ENCODE measurements at regions of chr11 and their contacts with region 1.

Region 1: GRCh38 chr11:108647701-108648527 is 17.0 kb upstream of the DDX10 start:
- DNase-seq: peak; percentile 69
- ATAC-seq: peak; percentile 99
- H3K4me3 ChIP-seq: no peak overlapping the region
- H3K27ac ChIP-seq: no peak overlapping the region
- H3K4me1 ChIP-seq: peaks cover 0 to 4% of the 10 kb centered on the region in 2 experiments; a peak in 2 of 4 replicates
- H3K27me3 ChIP-seq: no peaks in the 10 kb centered on the region
- CTCF ChIP-seq: peak; percentile 82 to 90 (median 84)
- POLR2A ChIP-seq: no peak
- RAD21 ChIP-seq: peak; percentile 99

Region 2: DNA sequence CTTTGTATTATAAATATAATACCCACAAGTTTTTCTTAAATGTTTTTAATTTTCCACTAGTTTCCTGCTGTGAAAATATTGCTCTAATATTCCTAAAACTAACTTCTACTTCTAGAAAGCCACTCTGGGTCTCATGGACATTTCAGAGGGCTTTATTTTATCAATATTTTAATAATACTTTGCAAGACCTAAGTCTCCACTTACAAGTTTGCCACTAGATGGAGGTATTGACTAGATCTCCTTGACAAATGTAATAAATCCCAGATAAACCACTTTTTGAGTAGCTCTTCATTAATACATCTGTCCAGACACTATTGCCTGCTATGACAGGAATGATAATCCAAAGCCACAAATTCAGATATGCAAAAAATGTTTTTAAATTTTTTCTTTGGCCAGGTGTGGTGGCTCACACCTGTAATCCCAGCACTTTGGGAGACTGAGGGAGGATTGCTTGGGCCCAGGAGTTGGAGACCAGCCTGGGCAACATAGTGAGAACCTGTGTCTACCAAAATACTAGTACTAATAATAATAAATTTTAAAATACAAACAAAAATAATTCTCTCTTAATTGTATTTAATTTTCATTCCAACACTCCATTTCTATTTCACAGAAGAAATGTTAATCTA is 530.1 kb before region 1 on chr11:
- CTCF ChIA-PET with region 1: interaction called, 23 read pairs
- POLR2A ChIA-PET with region 1: interaction called, 3 read pairs
- RAD21 ChIA-PET with region 1: no interaction called
- intact Hi-C with region 1: loop called (anchors 2 kb)
- DNase-seq: peak; percentile 52
- ATAC-seq: no peak
- H3K4me3 ChIP-seq: no peak overlapping the region
- H3K27ac ChIP-seq: no peak overlapping the region
- H3K4me1 ChIP-seq: peaks cover 5 to 28% of the 10 kb centered on the region in 2 experiments; a peak in 3 of 4 replicates
- H3K27me3 ChIP-seq: no peaks in the 10 kb centered on the region
- CTCF ChIP-seq: peak; percentile 61 to 75 (median 66); a peak in 5 of 6 replicates
- POLR2A ChIP-seq: no peak
- RAD21 ChIP-seq: peak; percentile 85

Region 3: DNA sequence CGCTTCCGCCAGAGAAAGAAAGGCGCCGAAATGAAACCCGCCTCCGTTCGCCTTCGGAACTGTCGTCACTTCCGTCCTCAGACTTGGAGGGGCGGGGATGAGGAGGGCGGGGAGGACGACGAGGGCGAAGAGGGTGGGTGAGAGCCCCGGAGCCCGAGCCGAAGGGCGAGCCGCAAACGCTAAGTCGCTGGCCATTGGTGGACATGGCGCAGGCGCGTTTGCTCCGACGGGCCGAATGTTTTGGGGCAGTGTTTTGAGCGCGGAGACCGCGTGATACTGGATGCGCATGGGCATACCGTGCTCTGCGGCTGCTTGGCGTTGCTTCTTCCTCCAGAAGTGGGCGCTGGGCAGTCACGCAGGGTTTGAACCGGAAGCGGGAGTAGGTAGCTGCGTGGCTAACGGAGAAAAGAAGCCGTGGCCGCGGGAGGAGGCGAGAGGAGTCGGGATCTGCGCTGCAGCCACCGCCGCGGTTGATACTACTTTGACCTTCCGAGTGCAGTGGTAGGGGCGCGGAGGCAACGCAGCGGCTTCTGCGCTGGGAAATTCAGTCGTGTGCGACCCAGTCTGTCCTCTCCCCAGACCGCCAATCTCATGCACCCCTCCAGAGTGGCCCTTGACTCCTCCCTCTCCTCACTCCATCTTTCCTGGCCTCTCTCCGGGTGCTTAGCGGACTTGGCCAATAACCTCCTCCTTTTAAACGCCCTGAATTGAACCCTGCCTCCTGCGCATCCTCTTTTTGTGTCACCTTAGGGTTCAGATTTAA is 425.0 kb before region 1 on chr11 and contains the start of gene ATM:
- CTCF ChIA-PET with region 1: interaction called, 4 read pairs
- POLR2A ChIA-PET with region 1: no interaction called
- RAD21 ChIA-PET with region 1: no interaction called
- intact Hi-C with region 1: loop called (anchors 1 kb)
- DNase-seq: peak; percentile 98
- ATAC-seq: peak; percentile 93
- H3K4me3 ChIP-seq: peak within 1 kb of the TSS; percentile 86 to 90
- H3K27ac ChIP-seq: peak within 1 kb of the TSS; percentile 80
- H3K4me1 ChIP-seq: peaks cover 6 to 22% of the 10 kb centered on the region in 2 experiments; a peak in 3 of 4 replicates
- H3K27me3 ChIP-seq: no peaks in the 10 kb centered on the region
- CTCF ChIP-seq: peak; percentile 55 to 82 (median 77); a peak in 5 of 6 replicates
- POLR2A ChIP-seq: peak; percentile 62
- RAD21 ChIP-seq: peak; percentile 83
- total RNA-seq, gene ATM: 32.2 TPM

Region 4: DNA sequence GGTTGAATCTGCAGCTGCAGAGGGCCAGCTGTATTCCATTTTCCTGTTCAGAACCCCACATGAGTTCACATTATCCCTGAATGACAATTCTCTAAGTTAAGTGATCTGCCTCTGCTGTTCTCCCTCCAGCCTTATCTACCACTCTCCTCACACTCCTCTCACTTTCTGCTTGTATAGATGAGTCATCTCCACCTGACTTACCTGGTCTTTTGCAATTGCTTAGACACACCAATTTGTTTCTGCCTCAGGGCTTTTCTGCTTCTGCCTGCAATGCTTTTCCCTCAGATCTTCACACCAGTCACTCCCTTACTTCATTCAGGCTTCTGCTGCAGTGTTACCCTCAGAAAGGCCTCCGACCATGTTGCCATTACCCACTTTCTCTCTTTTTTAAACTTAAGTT is 306.9 kb before region 1 on chr11:
- CTCF ChIA-PET with region 1: no interaction called
- POLR2A ChIA-PET with region 1: no interaction called
- RAD21 ChIA-PET with region 1: no interaction called
- intact Hi-C with region 1: loop called (anchors 5 kb)
- DNase-seq: peak; percentile 55
- ATAC-seq: peak; percentile 85
- H3K4me3 ChIP-seq: no peak overlapping the region
- H3K27ac ChIP-seq: no peak overlapping the region
- H3K4me1 ChIP-seq: peaks cover 9 to 10% of the 10 kb centered on the region in 2 experiments
- H3K27me3 ChIP-seq: no peaks in the 10 kb centered on the region
- CTCF ChIP-seq: no peak
- POLR2A ChIP-seq: no peak
- RAD21 ChIP-seq: peak; percentile 21

Region 5: GRCh38 chr11:108414958-108415357 is 233.0 kb before region 1 on chr11:
- CTCF ChIA-PET with region 1: no interaction called
- POLR2A ChIA-PET with region 1: no interaction called
- RAD21 ChIA-PET with region 1: no interaction called
- intact Hi-C with region 1: loop called (anchors 1 kb)
- DNase-seq: no peak
- ATAC-seq: no peak
- H3K4me3 ChIP-seq: no peak overlapping the region
- H3K27ac ChIP-seq: no peak overlapping the region
- H3K4me1 ChIP-seq: no peaks in the 10 kb centered on the region
- H3K27me3 ChIP-seq: no peaks in the 10 kb centered on the region
- CTCF ChIP-seq: no peak
- POLR2A ChIP-seq: no peak
- RAD21 ChIP-seq: no peak

Region 6: GRCh38 chr11:108474664-108475485 is 173.0 kb before region 1 on chr11:
- CTCF ChIA-PET with region 1: no interaction called
- POLR2A ChIA-PET with region 1: no interaction called
- RAD21 ChIA-PET with region 1: no interaction called
- intact Hi-C with region 1: no loop called
- DNase-seq: no peak
- ATAC-seq: no peak
- H3K4me3 ChIP-seq: no peak overlapping the region
- H3K27ac ChIP-seq: no peak overlapping the region
- H3K4me1 ChIP-seq: no peaks in the 10 kb centered on the region
- H3K27me3 ChIP-seq: no peaks in the 10 kb centered on the region
- CTCF ChIP-seq: no peak
- POLR2A ChIP-seq: no peak
- RAD21 ChIP-seq: no peak

Region 7: DNA sequence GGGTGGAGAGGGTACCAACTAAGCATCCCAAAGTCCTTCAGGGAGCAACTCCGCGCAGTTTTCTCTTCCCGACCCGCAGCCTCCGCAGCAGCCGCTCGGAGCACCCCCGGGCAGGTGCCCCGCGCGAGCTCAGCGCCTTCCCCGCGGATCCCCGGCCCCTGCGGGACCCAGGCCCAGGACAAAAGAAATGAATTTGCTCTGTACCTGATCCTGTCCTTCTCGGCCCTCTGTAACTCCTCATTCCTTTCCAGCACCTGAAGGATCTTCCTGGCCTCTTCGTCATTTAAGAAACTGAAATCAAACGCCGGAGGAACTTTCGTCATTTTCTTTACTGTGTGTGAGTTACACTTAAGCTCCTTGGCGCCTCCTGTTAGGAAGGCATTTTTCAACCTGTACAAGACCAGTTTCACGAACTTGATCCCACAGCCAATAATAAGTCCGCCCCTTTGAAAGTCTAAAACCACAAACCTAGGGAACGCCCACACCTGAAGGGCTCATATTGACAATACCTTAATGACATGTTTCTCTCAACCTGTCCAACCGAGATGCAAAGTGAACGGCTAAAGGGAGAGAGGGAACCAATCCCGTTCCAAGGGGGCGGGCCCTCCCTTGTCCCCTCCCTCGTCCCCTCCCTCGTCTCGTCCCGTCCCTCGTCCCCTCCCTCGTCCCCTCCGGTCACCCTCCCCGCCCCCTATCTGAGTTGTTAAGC is 54.5 kb before region 1 on chr11 and contains the start of gene EXPH5:
- CTCF ChIA-PET with region 1: interaction called, 6 read pairs
- POLR2A ChIA-PET with region 1: no interaction called
- RAD21 ChIA-PET with region 1: interaction called in 1 of 2 experiments, 3 read pairs
- intact Hi-C with region 1: loop called (anchors 5 kb)
- DNase-seq: peak; percentile 99
- ATAC-seq: peak; percentile 97
- H3K4me3 ChIP-seq: peak within 1 kb of the TSS; percentile 78 to 86
- H3K27ac ChIP-seq: peak within 1 kb of the TSS; percentile 74
- H3K4me1 ChIP-seq: peaks cover 14 to 20% of the 10 kb centered on the region in 2 experiments
- H3K27me3 ChIP-seq: no peaks in the 10 kb centered on the region
- CTCF ChIP-seq: no peak
- POLR2A ChIP-seq: peak; percentile 70
- RAD21 ChIP-seq: peak; percentile 27; the same call in 1 of the 2 replicates
- total RNA-seq, gene EXPH5: 18.3 TPM

Region 8: DNA sequence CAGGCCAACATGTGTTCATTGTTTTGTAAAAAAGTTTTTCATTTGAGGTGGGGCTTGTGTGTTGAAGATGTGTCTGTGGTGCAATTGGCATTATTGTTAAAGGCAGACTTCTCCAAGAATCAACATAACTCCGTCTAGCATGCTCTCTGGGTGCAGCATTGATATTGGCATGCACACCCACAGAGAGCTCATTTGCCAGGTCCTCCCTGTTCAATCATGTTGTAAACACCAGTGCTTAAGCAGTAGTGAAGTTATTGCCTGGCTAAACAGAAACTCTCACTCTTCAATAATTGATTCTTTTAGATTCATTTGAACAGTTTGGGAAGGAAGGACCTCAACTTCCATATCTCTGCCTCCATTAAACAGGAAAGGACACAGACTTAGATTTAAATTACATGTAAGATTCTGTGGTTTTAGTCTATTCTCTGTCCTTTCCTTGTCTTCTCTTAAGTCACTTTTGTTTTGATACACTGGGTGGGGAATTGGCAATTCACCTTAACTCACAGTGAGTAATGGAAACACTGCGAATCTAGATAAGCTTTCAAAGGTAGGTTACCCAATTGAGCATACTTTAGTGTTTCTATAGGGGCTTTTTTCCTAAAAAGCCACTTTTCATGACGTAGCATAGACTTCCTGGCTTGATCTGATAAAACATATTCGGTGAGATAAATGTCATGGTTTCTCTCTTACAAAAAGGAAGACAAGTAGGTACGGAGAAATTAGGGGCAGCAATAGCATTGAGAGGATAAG is 23.5 kb before region 1 on chr11:
- CTCF ChIA-PET with region 1: no interaction called
- POLR2A ChIA-PET with region 1: no interaction called
- RAD21 ChIA-PET with region 1: no interaction called
- intact Hi-C with region 1: no loop called
- DNase-seq: no peak
- ATAC-seq: no peak
- H3K4me3 ChIP-seq: no peak overlapping the region
- H3K27ac ChIP-seq: no peak overlapping the region
- H3K4me1 ChIP-seq: peaks cover 0 to 11% of the 10 kb centered on the region in 2 experiments; a peak in 1 of 4 replicates
- H3K27me3 ChIP-seq: no peaks in the 10 kb centered on the region
- CTCF ChIP-seq: no peak
- POLR2A ChIP-seq: no peak
- RAD21 ChIP-seq: no peak

Measured in HCT116 (cell line).